Breast epithelium (tissue), 4 donors: ENCODE measurements at regions of chr12 and their contacts with region 1.

Region 1: DNA sequence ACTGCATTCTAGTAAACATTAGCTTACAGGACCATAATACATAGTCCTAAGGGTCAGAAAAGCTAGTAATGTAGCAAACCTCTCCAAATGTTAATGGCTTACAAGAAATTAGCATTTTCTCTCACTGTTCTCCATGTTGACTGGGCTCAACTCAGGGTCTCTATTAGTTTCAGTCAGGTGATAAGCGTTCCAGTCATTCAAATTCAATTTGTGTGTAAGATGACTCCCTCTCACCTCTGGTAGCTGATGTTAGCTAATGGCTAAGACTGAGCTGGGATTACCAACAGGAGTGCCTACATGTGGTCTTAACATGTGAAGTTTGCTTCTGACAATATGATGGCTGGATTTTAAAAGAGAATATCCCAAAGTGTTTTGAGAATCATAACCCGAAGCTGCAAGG is 630.5 kb upstream of the USP15 start:
- DNase-seq: no peak
- H3K4me3 ChIP-seq: no peak overlapping the region
- H3K27ac ChIP-seq: no peak overlapping the region
- H3K4me1 ChIP-seq: no peaks in the 10 kb centered on the region
- H3K27me3 ChIP-seq: no peaks in the 10 kb centered on the region
- CTCF ChIP-seq: no peak
- POLR2A ChIP-seq: no peak

Region 2: GRCh38 chr12:61667676-61668075 is 38.0 kb after region 1 on chr12:
- intact Hi-C with region 1: no loop called
- DNase-seq: no peak
- H3K4me3 ChIP-seq: no peak overlapping the region
- H3K27ac ChIP-seq: no peak overlapping the region
- H3K4me1 ChIP-seq: no peaks in the 10 kb centered on the region
- H3K27me3 ChIP-seq: no peaks in the 10 kb centered on the region
- CTCF ChIP-seq: no peak
- POLR2A ChIP-seq: no peak

Region 3: GRCh38 chr12:61713121-61713520 is 83.4 kb after region 1 on chr12:
- intact Hi-C with region 1: no loop called
- DNase-seq: no peak
- H3K4me3 ChIP-seq: no peak overlapping the region
- H3K27ac ChIP-seq: no peak overlapping the region
- H3K4me1 ChIP-seq: no peaks in the 10 kb centered on the region
- H3K27me3 ChIP-seq: no peaks in the 10 kb centered on the region
- CTCF ChIP-seq: no peak
- POLR2A ChIP-seq: no peak

Region 4: DNA sequence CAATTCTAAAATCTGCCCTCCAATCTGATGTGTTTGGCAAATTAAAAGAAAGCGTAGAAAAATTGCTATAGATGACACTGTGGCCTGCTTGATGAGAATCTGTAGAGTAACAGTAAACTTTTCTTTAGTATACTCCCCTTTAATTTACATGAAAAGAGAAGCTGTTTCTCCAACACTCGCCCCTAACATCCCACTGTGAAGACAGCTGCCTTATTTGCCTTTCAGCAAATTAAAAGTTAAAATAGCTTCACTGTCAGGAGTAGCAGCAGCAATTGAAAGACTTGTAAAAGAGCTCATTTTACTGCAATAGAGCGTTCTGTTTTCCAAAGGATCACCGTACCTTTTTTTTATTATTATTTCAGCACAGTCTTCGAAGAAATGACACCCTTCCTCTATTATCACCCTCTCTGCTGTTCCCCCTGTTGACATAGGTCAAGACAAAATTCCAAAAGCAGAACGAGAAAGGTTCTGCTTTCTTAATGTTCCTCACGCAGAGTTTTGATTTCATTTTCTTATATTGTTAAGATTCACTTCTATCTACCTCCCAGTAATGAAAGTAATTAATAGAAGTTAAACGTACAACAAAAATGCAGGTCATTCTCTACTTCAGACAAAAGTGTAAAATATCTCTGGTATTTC is 477.0 kb after region 1 on chr12:
- intact Hi-C with region 1: loop called (anchors 5 kb)
- DNase-seq: no peak
- H3K4me3 ChIP-seq: peak overlapping the region in 1 of 3 donors; percentile 8
- H3K27ac ChIP-seq: no peak overlapping the region
- H3K4me1 ChIP-seq: no peaks in the 10 kb centered on the region
- H3K27me3 ChIP-seq: no peaks in the 10 kb centered on the region
- CTCF ChIP-seq: no peak
- POLR2A ChIP-seq: no peak